Activated naive CD4-positive, alpha-beta T cell treated with anti-CD3 and anti-CD28 coated beads for 36 hours (primary cell): ENCODE measurements at regions of chr10 and their contacts with region 1.

Region 1: GRCh38 chr10:131786756-131787605 is 113.8 kb upstream of the PPP2R2D start:
- DNase-seq: peak; percentile 64
- H3K4me3 Mint-ChIP-seq: no peak overlapping the region
- H3K27ac Mint-ChIP-seq: no peak overlapping the region
- H3K4me1 Mint-ChIP-seq: no peaks in the 10 kb centered on the region
- H3K27me3 Mint-ChIP-seq: peaks cover 9% of the 10 kb centered on the region

Region 2: GRCh38 chr10:130190055-130190736 is 1596.8 kb before region 1 on chr10:
- CTCF ChIA-PET with region 1: no interaction called
- intact Hi-C with region 1: loop called (anchors 1 kb)
- DNase-seq: peak; percentile 88
- H3K4me3 Mint-ChIP-seq: peak overlapping the region; percentile 15
- H3K27ac Mint-ChIP-seq: no peak overlapping the region
- H3K4me1 Mint-ChIP-seq: peaks cover 3% of the 10 kb centered on the region
- H3K27me3 Mint-ChIP-seq: peaks cover 6% of the 10 kb centered on the region

Region 3: GRCh38 chr10:131453594-131454355 is 333.2 kb before region 1 on chr10:
- CTCF ChIA-PET with region 1: interaction called, 5 read pairs
- intact Hi-C with region 1: loop called (anchors 1 kb)
- DNase-seq: peak; percentile 91
- H3K4me3 Mint-ChIP-seq: peak overlapping the region; percentile 38
- H3K27ac Mint-ChIP-seq: no peak overlapping the region
- H3K4me1 Mint-ChIP-seq: peaks cover 10% of the 10 kb centered on the region
- H3K27me3 Mint-ChIP-seq: peaks cover 23% of the 10 kb centered on the region

Region 4: GRCh38 chr10:131771629-131772358 is 15.2 kb before region 1 on chr10:
- CTCF ChIA-PET with region 1: no interaction called
- intact Hi-C with region 1: no loop called
- DNase-seq: no peak
- H3K4me3 Mint-ChIP-seq: no peak overlapping the region
- H3K27ac Mint-ChIP-seq: no peak overlapping the region
- H3K4me1 Mint-ChIP-seq: no peaks in the 10 kb centered on the region
- H3K27me3 Mint-ChIP-seq: no peaks in the 10 kb centered on the region